PC-3 (cell line): ENCODE measurements at regions of chr10 and their contacts with region 1.

Region 1: GRCh38 chr10:4725917-4726606 is 99.9 kb upstream of the AKR1E2 start:
- DNase-seq: peak; percentile 83
- ATAC-seq: peak; percentile 94
- H3K4me3 ChIP-seq: peak overlapping the region; percentile 34; the same call in 1 of the 2 replicates
- H3K27ac ChIP-seq: peak overlapping the region; percentile 98
- H3K4me1 ChIP-seq: peaks cover 39% of the 10 kb centered on the region
- H3K27me3 ChIP-seq: no peaks in the 10 kb centered on the region
- CTCF ChIP-seq: no peak

Region 2: GRCh38 chr10:4671451-4672145 is 54.5 kb before region 1 on chr10:
- CTCF ChIA-PET with region 1: no interaction called
- POLR2A ChIA-PET with region 1: interaction called, 5 read pairs
- intact Hi-C with region 1: loop called (anchors 2 kb)
- DNase-seq: peak; percentile 88
- ATAC-seq: peak; percentile 89
- H3K4me3 ChIP-seq: peak overlapping the region; percentile 44; the same call in 1 of the 2 replicates
- H3K27ac ChIP-seq: peak overlapping the region; percentile 99
- H3K4me1 ChIP-seq: peaks cover 60% of the 10 kb centered on the region
- H3K27me3 ChIP-seq: no peaks in the 10 kb centered on the region
- CTCF ChIP-seq: no peak

Region 3: DNA sequence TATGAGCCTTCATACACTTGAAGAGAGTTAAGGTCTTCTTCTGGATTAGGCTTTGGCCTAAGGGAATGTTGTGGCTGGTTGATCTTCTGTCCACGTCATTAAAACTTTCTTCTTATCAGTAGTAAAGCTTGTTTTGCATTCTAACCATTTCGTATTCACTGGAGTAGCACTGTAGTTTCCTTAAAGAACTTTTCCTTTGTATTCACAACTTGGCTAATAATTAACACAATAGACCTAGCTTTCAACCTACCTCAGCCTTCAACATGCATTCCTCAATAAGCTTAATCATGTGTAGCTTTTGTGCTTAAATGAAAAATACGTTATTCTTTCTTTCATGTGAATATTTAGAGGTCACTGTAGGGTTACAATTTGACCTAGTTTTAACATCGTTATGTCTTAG is 416.1 kb after region 1 on chr10:
- CTCF ChIA-PET with region 1: no interaction called
- POLR2A ChIA-PET with region 1: no interaction called
- intact Hi-C with region 1: no loop called
- DNase-seq: no peak
- ATAC-seq: no peak
- H3K4me3 ChIP-seq: no peak overlapping the region
- H3K27ac ChIP-seq: no peak overlapping the region
- H3K4me1 ChIP-seq: no peaks in the 10 kb centered on the region
- H3K27me3 ChIP-seq: no peaks in the 10 kb centered on the region
- CTCF ChIP-seq: no peak